Heart right ventricle (tissue), 16 donors: ENCODE measurements at regions of chr4 and their contacts with region 1.

Region 1: GRCh38 chr4:55546756-55547465 is at the start of gene CLOCK:
- DNase-seq: peak; percentile 88 to 90
- ATAC-seq: peak; percentile 89 to 96 (median 92)
- H3K4me3 ChIP-seq: peak within 1 kb of the TSS; percentile 73 to 99 (median 98)
- H3K27ac ChIP-seq: peak within 1 kb of the TSS; percentile 94 to 100 (median 99)
- H3K4me1 ChIP-seq: peaks cover 0 to 28% (median 19%) of the 10 kb centered on the region in 9 donors
- H3K27me3 ChIP-seq: no peaks in the 10 kb centered on the region
- CTCF ChIP-seq: peak; percentile 42 to 78 (median 70)
- total RNA-seq, gene CLOCK: 25.4 to 40.7 (median 32.5) TPM

Region 2: DNA sequence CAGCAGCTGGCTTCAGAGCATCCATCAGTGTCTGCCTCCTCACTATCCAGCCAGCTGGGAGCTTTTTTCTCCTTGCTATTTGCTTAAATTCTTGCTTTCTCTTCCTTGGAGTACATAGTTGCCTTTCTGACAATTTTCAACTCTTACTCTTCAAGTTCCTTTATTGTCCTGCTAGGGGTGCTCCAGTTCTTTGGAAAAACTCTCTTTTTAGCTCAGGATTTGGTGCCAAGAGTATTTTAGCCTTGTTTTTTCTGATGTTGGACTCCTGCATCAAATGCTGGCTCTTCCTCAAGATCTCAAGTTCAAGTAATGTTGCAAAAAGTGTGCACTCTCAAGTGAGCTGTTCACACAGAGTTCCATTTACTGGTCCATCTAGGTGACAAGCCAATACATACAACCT is 547.9 kb before region 1 on chr4:
- intact Hi-C with region 1: loop called in 3 of 10 experiments (anchors 5 to 10 kb)
- DNase-seq: no peak
- ATAC-seq: peak in 7 of 8 donors; percentile 43 to 84 (median 65)
- H3K4me3 ChIP-seq: no peak overlapping the region
- H3K27ac ChIP-seq: no peak overlapping the region
- H3K4me1 ChIP-seq: peaks cover 0 to 15% (median 1%) of the 10 kb centered on the region in 9 donors
- H3K27me3 ChIP-seq: no peaks in the 10 kb centered on the region
- CTCF ChIP-seq: peak; percentile 49 to 72 (median 56)

Region 3: DNA sequence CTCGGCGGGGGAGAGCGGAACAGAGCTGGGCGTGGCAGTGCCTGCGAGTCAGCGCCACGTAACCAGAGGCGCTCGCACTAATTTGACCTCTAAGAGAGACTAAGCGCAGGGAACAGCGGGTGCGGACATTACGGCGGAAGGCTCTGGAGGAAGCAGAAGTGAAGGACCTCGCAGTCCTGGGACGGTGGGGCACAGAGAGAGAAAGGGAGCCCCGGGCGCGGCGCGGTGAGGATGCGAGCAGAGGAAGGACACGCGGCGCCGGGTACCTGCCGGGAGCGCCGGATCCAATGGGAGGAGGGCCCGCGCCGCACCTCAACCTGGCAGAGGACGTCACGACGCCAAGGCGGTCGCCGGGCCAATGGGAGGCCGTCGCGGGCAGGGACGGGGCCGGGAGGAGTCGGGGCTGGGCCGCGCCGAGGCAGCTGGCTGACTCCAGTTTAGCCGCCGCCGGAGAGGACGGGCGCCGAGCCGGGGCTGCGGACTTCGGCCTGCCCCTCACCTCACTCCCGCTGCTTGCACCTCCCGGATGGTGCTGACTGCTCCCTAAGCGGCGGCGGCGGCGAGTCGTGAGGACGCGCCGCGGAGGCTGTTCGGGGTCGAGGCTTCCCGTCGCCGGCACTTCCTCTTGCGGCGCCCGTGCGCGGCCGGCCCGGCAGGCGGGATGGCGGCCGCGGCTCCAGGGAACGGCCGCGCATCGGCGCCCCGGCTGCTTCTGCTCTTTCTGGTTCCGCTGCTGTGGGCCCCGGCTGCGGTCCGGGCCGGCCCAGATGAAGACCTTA is 151.2 kb before region 1 on chr4 and contains the start of gene TMEM165:
- intact Hi-C with region 1: loop called in 4 of 10 experiments (anchors 5 to 10 kb)
- DNase-seq: peak; percentile 91
- ATAC-seq: peak; percentile 96 to 99 (median 97)
- H3K4me3 ChIP-seq: peak within 1 kb of the TSS; percentile 62 to 99 (median 90)
- H3K27ac ChIP-seq: peak within 1 kb of the TSS; percentile 91 to 100 (median 98)
- H3K4me1 ChIP-seq: peaks cover 0 to 40% (median 33%) of the 10 kb centered on the region in 9 donors
- H3K27me3 ChIP-seq: no peaks in the 10 kb centered on the region
- CTCF ChIP-seq: no peak
- total RNA-seq, gene TMEM165: 30.3 to 86.3 (median 34.6) TPM

Region 4: DNA sequence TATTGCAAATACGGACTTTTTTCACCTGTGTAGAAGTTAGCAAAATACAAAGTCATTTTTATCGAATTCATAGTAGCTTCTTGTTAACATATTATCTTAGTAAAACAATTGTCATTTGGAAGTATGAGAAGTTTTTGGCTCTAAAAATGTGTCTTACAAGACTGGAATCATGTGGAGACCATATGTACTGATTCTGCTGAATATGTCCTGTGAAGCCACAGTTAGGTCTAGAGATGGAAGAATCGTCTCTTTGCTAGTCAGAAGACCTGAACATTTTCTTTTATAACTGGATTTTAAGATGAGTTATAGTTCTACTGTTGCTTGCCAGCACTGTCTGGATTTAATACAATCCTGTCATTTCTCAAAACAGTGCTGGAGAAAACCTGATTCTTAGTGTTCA is 122.1 kb before region 1 on chr4:
- intact Hi-C with region 1: no loop called
- DNase-seq: no peak
- ATAC-seq: no peak
- H3K4me3 ChIP-seq: no peak overlapping the region
- H3K27ac ChIP-seq: no peak overlapping the region
- H3K4me1 ChIP-seq: peaks cover 0 to 6% (median 0%) of the 10 kb centered on the region in 9 donors
- H3K27me3 ChIP-seq: no peaks in the 10 kb centered on the region
- CTCF ChIP-seq: no peak

Region 5: GRCh38 chr4:55444827-55445226 is 102.1 kb before region 1 on chr4:
- intact Hi-C with region 1: loop called in 3 of 10 experiments (anchors 10 kb)
- DNase-seq: no peak
- ATAC-seq: no peak
- H3K4me3 ChIP-seq: no peak overlapping the region
- H3K27ac ChIP-seq: no peak overlapping the region
- H3K4me1 ChIP-seq: peaks cover 0 to 11% (median 0%) of the 10 kb centered on the region in 9 donors
- H3K27me3 ChIP-seq: no peaks in the 10 kb centered on the region
- CTCF ChIP-seq: peak in 7 of 9 donors; percentile 9 to 40 (median 28)

Region 6: GRCh38 chr4:55853484-55854046 is 306.7 kb after region 1 on chr4 and contains the start of gene EXOC1:
- intact Hi-C with region 1: loop called in 4 of 10 experiments (anchors 5 to 10 kb)
- DNase-seq: peak; percentile 99
- ATAC-seq: peak; percentile 99 to 100 (median 100)
- H3K4me3 ChIP-seq: peak within 1 kb of the TSS; percentile 82 to 98 (median 95)
- H3K27ac ChIP-seq: peak within 1 kb of the TSS; percentile 72 to 95 (median 90)
- H3K4me1 ChIP-seq: peaks cover 0 to 28% (median 21%) of the 10 kb centered on the region in 9 donors
- H3K27me3 ChIP-seq: peaks cover 0 to 5% (median 0%) of the 10 kb centered on the region in 7 donors
- CTCF ChIP-seq: no peak
- total RNA-seq, gene EXOC1: 16.0 to 26.3 (median 21.5) TPM